T-cell (primary cell): ENCODE measurements at regions of chr4 and their contacts with region 1.

Region 1: DNA sequence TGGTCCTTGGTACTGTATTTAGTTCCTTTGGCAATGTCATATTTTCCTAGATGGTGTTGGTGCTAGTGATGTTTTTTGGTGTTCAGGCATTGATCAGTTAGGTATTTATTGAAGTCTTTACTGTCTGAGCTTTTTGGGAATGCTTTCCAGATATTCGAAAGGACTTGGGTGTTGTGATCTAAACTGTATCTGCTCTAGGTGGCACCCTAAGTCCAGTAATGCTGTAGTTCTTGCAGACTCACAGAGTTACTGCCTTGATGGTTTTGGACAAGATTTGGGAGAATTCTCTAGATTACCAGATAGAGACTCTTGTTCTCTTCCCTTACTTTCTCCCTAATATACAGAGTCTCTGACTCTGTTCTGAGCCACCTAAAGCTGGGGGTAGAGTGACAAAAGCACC is 513.6 kb upstream of the PITX2 start:
- DNase-seq: no peak
- ATAC-seq: no peak
- H3K4me3 ChIP-seq: no peak overlapping the region
- H3K4me3 Mint-ChIP-seq: no peak overlapping the region
- H3K27ac ChIP-seq: no peak overlapping the region
- H3K27ac Mint-ChIP-seq: no peak overlapping the region
- H3K4me1 ChIP-seq: no peaks in the 10 kb centered on the region
- H3K4me1 Mint-ChIP-seq: no peaks in the 10 kb centered on the region
- H3K27me3 ChIP-seq: no peaks in the 10 kb centered on the region
- H3K27me3 Mint-ChIP-seq: no peaks in the 10 kb centered on the region

Region 2: GRCh38 chr4:111011458-111011857 is 125.0 kb before region 1 on chr4:
- CTCF ChIA-PET with region 1: no interaction called
- POLR2A ChIA-PET with region 1: interaction called in 1 of 2 experiments, 12 read pairs
- DNase-seq: no peak
- ATAC-seq: no peak
- H3K4me3 ChIP-seq: no peak overlapping the region
- H3K4me3 Mint-ChIP-seq: no peak overlapping the region
- H3K27ac ChIP-seq: no peak overlapping the region
- H3K27ac Mint-ChIP-seq: no peak overlapping the region
- H3K4me1 ChIP-seq: no peaks in the 10 kb centered on the region
- H3K4me1 Mint-ChIP-seq: no peaks in the 10 kb centered on the region
- H3K27me3 ChIP-seq: no peaks in the 10 kb centered on the region
- H3K27me3 Mint-ChIP-seq: no peaks in the 10 kb centered on the region